Common myeloid progenitor, CD34-positive (primary cell): ENCODE measurements at regions of chr11 and their contacts with region 1.

Region 1: DNA sequence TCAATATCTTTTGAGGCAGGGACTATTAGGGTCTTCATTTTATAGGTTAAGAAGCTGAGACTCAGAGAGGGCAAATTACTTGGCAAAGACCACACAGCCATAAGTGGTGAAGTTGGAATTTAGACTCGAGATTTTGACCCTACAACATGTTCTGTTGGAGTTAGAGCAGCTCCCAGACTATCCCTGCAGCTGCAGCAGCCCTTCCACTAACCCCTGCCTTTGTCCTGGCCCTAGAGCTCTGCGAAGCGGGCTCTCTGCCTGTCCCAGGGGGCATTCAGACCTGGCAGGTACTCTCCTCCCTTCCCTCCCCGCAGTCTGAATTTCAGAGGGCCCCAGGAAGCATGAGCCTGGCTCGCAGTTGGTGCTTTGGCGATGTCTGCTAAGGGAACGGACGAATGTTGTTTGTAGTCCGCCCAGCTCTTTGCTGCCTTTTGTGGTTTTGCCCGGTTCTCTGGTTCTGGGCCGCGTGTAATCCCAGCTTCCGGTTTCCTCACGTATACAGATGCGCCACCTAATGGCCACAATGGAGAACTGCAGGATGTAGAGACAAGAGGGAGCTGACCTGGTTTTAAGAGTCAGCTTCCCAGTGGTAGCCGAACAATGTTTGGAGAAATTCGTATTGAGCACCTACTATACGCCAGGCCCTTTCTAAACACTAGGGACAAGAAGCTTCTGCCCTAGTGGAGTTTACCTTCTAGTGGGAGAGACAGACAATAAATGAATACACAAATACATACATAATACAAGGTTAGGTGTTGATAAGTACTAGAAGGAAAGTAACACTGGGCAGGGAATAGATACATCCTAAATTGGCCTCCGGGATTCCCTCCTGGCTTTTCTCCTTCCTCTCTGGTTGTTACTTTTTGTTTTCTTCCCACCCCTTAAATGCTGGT is 125.2 kb downstream of the ST3GAL4 start:
- DNase-seq: peak; percentile 84 to 91 (median 89)
- H3K4me3 ChIP-seq: peak overlapping the region in 5 of 7 experiments; percentile 2 to 41 (median 29)
- H3K27ac ChIP-seq: no peak overlapping the region
- H3K4me1 ChIP-seq: peaks cover 0 to 59% (median 31%) of the 10 kb centered on the region in 4 experiments
- H3K27me3 ChIP-seq: no peaks in the 10 kb centered on the region

Region 2: DNA sequence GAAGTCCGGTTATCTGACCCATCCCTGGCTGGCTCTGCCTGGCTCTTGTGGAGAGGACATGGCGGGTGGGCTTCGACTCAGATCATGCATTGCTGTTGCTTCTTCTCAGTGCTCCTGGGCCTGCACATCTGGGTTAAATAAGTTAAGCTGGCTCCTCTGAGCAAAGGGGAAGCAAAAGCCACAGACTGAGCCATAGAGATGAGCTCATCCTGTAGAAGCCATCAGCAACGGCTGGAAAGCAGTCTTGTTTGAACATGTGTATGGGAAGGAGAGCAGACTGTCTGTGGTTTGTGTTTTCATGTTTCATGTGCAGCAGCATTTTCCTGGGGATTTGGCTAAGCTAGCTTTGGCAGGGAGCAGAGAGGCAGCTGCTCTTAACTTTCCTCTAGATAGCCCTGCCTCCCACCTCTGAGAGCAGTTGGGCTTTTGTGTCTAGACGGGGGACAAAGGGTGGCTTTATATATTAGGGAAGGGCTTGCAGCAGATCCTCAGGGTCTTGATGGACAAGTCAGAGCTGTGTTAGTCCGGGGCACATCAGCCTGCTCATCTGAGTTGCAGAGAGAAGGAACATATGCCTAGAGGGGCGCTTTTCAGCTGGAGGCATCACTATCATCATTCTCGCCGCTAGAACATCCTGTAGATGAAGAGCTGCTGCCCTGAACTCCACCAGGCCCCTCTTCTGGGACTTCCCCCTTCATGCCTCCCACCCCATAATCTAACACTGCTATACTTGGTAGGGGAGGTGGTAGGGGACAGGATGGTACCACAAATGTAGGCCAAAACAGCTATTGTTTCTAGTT is 161.9 kb before region 1 on chr11:
- CTCF ChIA-PET with region 1: interaction called, 105 read pairs
- POLR2A ChIA-PET with region 1: no interaction called
- DNase-seq: peak; percentile 65 to 90 (median 86)
- H3K4me3 ChIP-seq: peak overlapping the region in 4 of 7 experiments; percentile 25 to 50 (median 40)
- H3K27ac ChIP-seq: peak overlapping the region in 1 of 2 experiments; percentile 72
- H3K4me1 ChIP-seq: peaks cover 18 to 53% (median 35%) of the 10 kb centered on the region in 4 experiments
- H3K27me3 ChIP-seq: no peaks in the 10 kb centered on the region

Region 3: GRCh38 chr11:126440792-126441514 is 39.7 kb before region 1 on chr11:
- CTCF ChIA-PET with region 1: interaction called, 120 read pairs
- POLR2A ChIA-PET with region 1: no interaction called
- DNase-seq: peak; percentile 68 to 80 (median 74)
- H3K4me3 ChIP-seq: peak overlapping the region in 2 of 7 experiments; percentile 32 to 50
- H3K27ac ChIP-seq: no peak overlapping the region
- H3K4me1 ChIP-seq: peaks cover 0 to 49% (median 15%) of the 10 kb centered on the region in 4 experiments
- H3K27me3 ChIP-seq: no peaks in the 10 kb centered on the region

Region 4: GRCh38 chr11:126452241-126453101 is 28.2 kb before region 1 on chr11:
- CTCF ChIA-PET with region 1: interaction called, 120 read pairs
- POLR2A ChIA-PET with region 1: no interaction called
- DNase-seq: no peak
- H3K4me3 ChIP-seq: no peak overlapping the region
- H3K27ac ChIP-seq: no peak overlapping the region
- H3K4me1 ChIP-seq: peaks cover 0 to 16% (median 2%) of the 10 kb centered on the region in 4 experiments
- H3K27me3 ChIP-seq: no peaks in the 10 kb centered on the region

Region 5: DNA sequence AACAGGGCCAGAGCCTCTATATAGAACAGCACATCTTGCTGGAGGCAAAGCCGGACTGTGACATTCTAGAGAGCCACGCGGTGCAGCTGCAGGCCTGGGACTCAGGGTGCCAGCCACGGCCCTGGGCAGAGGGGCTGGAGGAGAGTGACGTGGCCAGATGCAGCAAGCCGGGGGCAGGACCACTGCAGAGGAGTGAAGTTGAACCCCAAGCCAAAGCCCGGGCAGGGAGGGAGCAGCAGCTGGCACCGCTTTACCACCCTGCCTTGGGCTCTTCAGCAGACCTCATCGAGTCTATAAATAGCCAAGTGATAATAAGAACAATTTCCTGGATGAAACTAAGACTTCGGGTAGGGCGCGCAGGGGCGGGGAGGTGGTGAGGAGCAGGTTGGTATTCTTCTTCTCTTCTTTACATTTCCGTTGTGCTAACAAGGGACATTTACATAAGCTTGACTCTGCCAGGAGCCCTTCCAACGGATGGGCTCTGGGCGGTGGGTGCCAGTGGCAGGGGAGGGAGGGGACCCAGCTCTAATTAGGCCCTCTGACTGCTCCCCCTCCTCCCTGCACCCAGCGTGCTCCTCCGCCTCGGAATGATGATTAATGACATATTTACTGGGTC is 15.0 kb before region 1 on chr11:
- CTCF ChIA-PET with region 1: interaction called, 64 read pairs
- POLR2A ChIA-PET with region 1: interaction called, 4 read pairs
- DNase-seq: peak in 1 of 3 donors; percentile 49
- H3K4me3 ChIP-seq: peak overlapping the region in 1 of 7 experiments; percentile 8
- H3K27ac ChIP-seq: no peak overlapping the region
- H3K4me1 ChIP-seq: peaks cover 0 to 74% (median 54%) of the 10 kb centered on the region in 4 experiments
- H3K27me3 ChIP-seq: no peaks in the 10 kb centered on the region

Region 6: DNA sequence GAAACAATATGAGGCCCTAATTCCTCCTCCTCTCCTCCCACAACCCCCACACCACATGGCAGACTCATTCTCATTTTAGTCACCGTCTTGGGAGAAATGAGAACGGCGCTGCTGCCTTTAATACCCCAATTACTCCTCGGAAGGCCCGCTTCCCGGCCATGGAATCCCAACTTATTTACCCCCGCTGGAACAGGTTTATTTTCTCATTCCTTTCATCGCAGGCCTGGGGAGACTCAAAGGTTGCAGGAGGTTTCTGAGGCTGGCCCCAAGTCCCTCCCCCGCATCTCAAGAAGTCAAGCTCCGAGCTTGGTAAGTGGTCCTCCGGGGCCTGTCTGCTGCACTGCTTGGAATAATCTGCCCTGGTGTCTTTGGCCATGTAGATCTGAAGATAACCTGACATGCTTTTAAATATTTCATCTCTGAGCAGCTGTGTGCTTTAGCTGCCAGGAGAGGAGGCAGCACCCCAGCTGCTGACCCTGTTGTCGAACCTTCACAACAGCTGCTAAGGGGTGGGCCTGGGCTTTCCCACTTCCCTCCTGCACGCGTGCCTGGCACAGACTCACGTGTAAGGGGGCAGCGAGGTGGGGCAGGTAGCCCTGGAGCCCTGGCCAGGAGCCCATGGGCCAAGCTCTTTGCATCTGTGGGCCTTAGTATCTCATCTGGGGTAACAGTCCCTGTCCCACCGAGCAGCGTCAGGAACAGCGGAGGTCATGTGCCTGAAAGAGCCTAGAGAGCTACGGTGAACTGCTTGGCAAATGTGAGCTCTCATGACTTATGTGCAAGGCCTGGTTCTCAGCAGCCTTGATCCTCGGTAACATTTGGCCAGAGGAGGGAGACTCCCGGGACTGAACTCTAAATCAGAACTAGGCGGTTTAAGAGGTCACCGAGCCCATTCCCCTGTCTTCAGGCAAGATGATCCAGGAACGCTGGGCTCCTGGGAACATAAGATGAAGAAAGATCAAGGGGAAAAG is 39.4 kb after region 1 on chr11:
- CTCF ChIA-PET with region 1: no interaction called
- POLR2A ChIA-PET with region 1: no interaction called
- DNase-seq: no peak
- H3K4me3 ChIP-seq: no peak overlapping the region
- H3K27ac ChIP-seq: no peak overlapping the region
- H3K4me1 ChIP-seq: peaks cover 0 to 2% (median 0%) of the 10 kb centered on the region in 4 experiments
- H3K27me3 ChIP-seq: peaks cover 0 to 9% (median 0%) of the 10 kb centered on the region in 5 experiments